Caco-2 (cell line): ENCODE measurements at regions of chr9 and their contacts with region 1.

Region 1: DNA sequence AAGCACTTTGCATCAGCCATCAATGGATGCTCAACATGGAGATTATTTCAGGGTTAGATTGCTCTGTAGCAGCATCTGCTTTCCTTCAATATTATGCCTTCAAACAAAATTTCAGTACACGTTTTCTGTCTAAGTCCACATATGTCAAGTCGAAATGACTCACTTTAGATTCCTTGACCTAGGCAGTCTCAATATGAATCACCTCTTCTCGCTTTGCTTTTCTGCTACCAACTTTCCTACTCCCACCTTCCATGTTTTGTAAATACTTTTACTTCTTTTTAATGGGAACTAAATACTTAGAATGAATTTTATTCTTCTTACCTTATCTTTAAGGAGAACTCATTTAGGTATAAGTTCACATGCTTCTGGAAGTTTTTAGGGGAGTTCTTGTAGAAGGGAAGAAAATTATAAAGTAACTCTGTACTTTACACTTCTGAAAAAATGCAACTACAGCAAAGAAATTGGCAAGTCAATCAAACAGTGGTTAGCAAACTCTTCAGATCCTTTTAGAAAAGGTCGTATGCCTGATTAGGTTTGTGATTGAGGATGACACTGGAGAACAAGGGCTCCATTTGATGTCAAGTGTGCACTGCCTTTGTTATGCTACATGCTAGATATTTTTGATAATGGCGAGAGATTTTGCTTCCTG is 478.5 kb upstream of the SMARCA2 start:
- DNase-seq: no peak
- H3K4me3 ChIP-seq: no peak overlapping the region
- H3K4me3 Mint-ChIP-seq: no peak overlapping the region
- H3K27ac Mint-ChIP-seq: no peak overlapping the region
- H3K4me1 ChIP-seq: no peaks in the 10 kb centered on the region
- H3K4me1 Mint-ChIP-seq: no peaks in the 10 kb centered on the region
- H3K27me3 ChIP-seq: no peaks in the 10 kb centered on the region
- H3K27me3 Mint-ChIP-seq: peaks cover 11% of the 10 kb centered on the region
- CTCF ChIP-seq: no peak

Region 2: DNA sequence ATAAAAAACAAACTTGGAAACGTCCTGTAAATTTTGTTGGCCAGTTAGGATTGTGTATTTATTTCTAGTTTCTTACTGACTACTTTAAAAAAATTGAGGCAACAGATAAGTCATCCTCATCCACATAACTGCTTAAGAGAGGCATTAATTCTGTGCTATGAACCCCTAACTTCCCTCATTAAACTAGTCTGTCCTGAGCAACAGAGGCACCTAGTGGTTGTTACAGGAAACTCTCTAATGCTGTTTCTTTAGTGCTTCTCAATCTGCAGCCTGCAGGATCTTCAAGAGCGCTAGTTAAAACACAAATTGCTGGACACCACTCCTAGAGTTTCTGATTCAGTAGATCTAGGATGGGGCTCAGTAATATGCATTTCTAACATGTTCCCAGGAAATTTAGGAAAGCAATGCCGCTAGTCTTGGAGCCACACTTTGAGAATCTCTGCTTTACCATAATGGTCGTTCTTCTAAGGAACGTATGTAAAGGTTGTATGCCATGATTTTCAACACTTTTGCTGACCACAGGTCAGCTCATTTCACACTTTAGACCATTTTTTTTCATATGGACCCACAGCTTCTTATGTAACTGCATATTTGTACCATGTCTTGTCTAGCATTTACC is 68.4 kb after region 1 on chr9:
- CTCF ChIA-PET with region 1: no interaction called
- POLR2A ChIA-PET with region 1: no interaction called
- intact Hi-C with region 1: loop called (anchors 10 kb)
- DNase-seq: peak; percentile 13 to 27
- H3K4me3 ChIP-seq: no peak overlapping the region
- H3K4me3 Mint-ChIP-seq: no peak overlapping the region
- H3K27ac Mint-ChIP-seq: no peak overlapping the region
- H3K4me1 ChIP-seq: no peaks in the 10 kb centered on the region
- H3K4me1 Mint-ChIP-seq: no peaks in the 10 kb centered on the region
- H3K27me3 ChIP-seq: no peaks in the 10 kb centered on the region
- H3K27me3 Mint-ChIP-seq: no peaks in the 10 kb centered on the region
- CTCF ChIP-seq: peak; percentile 37 to 51

Region 3: GRCh38 chr9:1683951-1684350 is 147.3 kb after region 1 on chr9:
- CTCF ChIA-PET with region 1: no interaction called
- POLR2A ChIA-PET with region 1: no interaction called
- intact Hi-C with region 1: no loop called
- DNase-seq: no peak
- H3K4me3 ChIP-seq: no peak overlapping the region
- H3K4me3 Mint-ChIP-seq: no peak overlapping the region
- H3K27ac Mint-ChIP-seq: no peak overlapping the region
- H3K4me1 ChIP-seq: no peaks in the 10 kb centered on the region
- H3K4me1 Mint-ChIP-seq: no peaks in the 10 kb centered on the region
- H3K27me3 ChIP-seq: no peaks in the 10 kb centered on the region
- H3K27me3 Mint-ChIP-seq: peaks cover 12% of the 10 kb centered on the region
- CTCF ChIP-seq: no peak